ENCODE measurements at regions of chr6 and their contacts with region 1.

Region 1: DNA sequence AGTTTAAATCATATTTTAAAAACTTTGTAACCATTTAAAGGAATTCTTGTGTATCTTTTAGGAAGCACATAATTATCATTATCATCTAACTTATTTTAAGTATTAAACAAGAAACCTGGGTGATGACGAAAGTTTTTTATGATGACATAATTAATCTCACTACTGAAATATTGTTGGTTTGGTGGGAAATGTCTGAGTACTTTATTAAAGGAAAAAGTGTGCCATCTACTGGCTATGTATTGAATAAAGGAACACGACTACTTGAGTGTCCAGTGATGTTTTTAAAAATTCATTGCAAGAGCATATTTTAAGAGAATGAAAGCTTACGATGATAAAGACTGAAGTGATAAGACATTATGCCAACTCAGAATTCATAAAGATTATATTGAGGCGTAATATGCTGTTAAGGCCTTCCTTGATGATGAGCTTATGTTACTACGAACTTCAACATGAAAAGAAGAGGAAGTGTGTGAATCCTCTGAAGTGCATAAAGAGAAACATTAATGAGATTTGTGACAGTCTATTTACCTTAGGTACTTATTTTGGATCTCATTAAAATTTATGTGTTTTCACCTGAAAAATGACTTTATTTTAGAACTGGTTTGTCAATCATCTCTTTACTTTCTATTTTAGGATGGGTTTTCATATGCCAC is 12.0 kb upstream of the TRMT11 start:
- DNase-seq: no peak
- ATAC-seq: peak; percentile 47
- H3K4me3 ChIP-seq: no peak overlapping the region
- H3K4me1 ChIP-seq: no peaks in the 10 kb centered on the region
- CTCF ChIP-seq: peak; percentile 34

Region 2: DNA sequence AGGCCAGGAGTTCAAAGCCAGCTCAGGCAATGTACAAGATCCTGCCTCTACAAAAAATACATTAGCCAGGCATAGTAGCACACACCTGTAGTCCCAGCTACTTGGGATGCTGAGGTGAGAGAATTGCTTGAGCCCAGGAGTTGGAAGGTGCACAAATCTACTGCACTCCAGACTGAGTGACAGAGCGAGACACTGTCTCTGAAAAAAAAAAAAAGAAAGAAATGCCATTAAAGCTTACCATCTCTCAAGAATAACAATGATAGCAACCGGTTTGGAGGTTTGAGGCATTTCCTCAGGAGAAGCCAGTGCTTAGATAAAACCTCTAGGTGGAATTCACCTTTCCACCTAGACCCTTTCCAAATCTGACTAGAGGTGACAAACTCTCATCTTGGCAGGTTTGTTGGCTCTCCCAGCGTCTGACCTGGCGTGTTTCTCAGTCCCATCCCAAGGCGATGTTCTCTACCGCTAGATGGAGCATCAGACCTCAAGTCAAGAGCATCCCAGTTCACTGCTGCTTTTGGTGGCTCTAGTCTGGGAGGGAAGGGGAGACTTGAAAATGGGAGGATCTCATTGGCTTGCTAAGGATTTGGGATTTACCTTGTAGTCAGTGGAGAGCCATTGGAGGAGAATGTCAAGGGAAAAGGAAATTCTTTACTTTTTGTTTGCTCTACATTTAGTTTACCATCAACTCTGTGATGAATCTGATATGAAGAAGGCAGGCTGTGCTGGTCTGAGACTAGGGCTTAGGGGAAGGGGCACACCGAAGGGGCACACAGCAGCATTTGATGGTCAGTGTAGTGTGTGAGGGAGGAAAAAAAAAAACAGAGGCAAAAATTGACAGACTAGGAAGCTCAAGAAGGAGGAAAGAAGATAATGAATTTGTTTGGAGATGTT is 115.7 kb before region 1 on chr6:
- intact Hi-C with region 1: loop called in 1 of 2 experiments (anchors 5 kb)
- DNase-seq: peak in 2 of 3 donors; percentile 45 to 81
- ATAC-seq: peak; percentile 92
- H3K4me3 ChIP-seq: no peak overlapping the region
- H3K4me1 ChIP-seq: no peaks in the 10 kb centered on the region
- CTCF ChIP-seq: peak; percentile 53

Region 3: DNA sequence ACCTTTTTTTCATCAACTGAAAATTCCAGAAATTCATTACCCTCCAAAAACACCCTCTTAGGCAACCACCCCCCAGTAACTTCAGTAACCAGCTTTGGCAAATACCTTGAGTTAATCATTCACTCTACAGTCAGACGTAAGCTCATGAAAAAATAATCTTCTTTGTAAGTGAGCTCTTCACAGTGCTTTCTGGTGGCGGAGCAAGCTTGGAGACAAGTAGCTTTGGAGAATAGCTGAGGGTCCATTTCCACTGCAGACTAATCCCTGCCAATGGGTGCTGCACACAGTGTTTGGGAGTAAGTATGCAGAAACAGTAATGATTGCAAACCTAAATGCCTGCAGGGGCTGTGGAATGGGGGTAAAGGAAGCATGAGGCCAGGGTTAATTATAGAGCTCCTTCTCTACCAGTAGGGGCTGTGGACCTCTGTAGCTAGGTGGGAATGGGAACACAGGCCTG is 74.6 kb before region 1 on chr6:
- intact Hi-C with region 1: no loop called
- DNase-seq: no peak
- ATAC-seq: peak; percentile 64
- H3K4me3 ChIP-seq: no peak overlapping the region
- H3K4me1 ChIP-seq: no peaks in the 10 kb centered on the region
- CTCF ChIP-seq: no peak

Region 4: GRCh38 chr6:125910527-125910926 is 63.8 kb before region 1 on chr6:
- intact Hi-C with region 1: no loop called
- DNase-seq: no peak
- ATAC-seq: peak; percentile 81
- H3K4me3 ChIP-seq: no peak overlapping the region
- H3K4me1 ChIP-seq: peaks cover 17% of the 10 kb centered on the region
- CTCF ChIP-seq: no peak

Region 5: DNA sequence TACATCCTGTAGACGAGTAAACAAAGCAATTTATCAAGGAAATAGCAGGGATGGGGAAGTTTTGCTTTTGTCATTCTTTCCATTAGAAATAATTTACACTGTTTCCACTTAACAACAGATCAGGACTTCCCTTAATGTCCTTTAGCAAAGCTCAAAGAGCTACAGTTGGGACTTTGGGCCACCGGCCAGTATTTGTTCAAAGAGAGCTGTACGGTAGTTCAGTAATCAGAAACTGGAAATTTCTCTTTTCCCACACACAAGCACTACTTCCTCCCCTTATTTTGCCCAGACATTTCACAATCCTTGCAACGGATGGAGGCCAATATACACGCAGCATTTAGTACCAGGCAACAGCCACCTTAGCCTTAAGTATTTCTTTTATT is 29.9 kb before region 1 on chr6:
- intact Hi-C with region 1: no loop called
- DNase-seq: peak; percentile 62 to 86 (median 70)
- ATAC-seq: peak; percentile 80
- H3K4me3 ChIP-seq: no peak overlapping the region
- H3K4me1 ChIP-seq: peaks cover 21% of the 10 kb centered on the region
- CTCF ChIP-seq: no peak

Measured in mucosa of descending colon (tissue), 3 donors.